Right cardiac atrium (tissue), 5 donors: ENCODE measurements at regions of chr11 and their contacts with region 1.

Region 1: DNA sequence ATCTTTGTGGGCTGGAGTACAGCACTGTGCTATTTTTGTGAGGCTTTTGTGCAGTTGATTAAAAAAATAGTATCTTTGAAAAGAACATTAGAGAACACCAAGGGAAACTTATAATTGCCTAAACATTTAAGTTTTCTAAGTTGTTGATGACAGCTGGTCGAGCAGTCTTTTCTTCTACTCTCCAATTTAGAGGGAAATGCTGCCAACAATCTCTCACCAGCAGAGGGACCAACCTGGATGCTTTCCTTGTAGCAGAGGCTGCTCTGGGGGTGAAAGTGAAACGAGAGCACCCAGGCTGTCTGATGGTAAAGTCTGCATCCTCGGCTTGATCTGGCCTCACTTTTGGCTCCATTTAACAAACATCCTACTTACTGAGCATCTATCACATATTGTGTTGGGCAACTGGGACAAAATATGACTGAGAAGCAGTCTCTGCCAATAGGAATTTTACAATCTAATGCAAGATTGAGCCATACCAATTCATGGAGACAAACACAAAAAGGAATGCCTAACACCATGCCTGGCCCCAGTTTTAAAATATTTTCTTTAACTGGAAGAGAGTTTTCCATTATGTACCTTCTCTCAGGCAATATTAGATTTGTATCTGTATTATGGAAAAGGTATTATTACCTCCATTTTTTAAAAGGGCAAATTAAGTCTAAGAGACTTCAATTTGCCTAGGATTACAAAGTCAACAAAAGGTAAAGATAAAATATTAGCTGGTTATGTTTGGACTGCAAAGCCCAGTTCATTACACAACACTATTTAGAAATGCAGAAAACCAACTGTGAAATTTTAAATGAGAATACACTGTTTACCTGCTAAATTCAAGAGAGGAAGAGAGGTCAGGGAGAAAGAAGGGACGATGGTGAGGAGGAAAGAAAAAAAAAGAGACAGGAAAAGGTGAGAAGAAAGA is 1286.7 kb upstream of the TENM4 start:
- DNase-seq: peak in 1 of 3 donors; percentile 25
- ATAC-seq: no peak
- H3K4me3 ChIP-seq: no peak overlapping the region
- H3K27ac ChIP-seq: no peak overlapping the region
- H3K4me1 ChIP-seq: no peaks in the 10 kb centered on the region
- H3K27me3 ChIP-seq: no peaks in the 10 kb centered on the region

Region 2: DNA sequence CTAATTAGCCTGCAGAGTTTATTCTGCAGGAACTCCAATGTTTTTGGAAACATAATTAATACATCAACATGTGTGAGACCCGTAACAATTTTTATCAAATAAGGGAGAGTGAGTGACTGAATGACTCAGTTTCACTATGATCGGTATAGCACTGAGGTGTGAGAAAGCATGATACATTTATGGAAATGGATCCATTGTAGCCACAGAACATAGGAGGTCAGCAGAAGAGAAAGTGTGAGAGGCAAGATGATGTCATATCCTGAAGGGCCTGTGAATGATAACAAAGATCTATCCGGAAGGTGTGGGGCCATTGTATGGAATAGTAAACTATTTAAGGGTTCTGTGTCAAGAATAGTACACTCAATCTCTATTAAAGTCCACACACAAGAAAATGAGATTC is 119.4 kb after region 1 on chr11:
- intact Hi-C with region 1: no loop called
- DNase-seq: no peak
- ATAC-seq: no peak
- H3K4me3 ChIP-seq: no peak overlapping the region
- H3K27ac ChIP-seq: no peak overlapping the region
- H3K4me1 ChIP-seq: no peaks in the 10 kb centered on the region
- H3K27me3 ChIP-seq: no peaks in the 10 kb centered on the region

Region 3: DNA sequence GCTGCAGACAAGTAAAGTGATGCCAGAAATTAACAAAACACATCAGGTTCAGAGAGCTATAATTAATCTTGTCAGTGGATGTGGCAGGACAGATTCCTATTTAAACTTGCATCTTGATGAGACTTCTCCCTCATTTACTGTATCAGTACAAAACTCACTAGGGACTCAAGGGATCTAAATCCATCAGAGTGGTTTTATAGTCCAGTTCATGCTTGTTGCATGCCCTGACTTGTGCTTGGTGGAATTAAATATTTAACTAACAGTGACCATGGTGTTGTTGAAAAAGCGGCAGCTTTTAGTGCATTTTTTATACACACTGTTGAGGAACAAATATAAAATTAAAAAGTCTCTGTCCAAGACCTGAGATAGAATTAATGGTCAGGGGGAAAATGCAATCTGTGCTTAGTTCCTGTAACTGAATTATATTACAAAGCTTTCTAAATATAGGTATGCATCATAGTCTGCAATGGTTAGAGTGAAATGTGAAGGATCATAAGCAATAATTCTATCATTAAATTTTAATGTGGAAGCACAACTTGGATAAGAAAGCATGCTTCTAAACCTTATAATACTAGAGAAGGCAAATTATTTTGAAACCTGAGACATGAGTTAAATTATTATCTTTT is 188.7 kb after region 1 on chr11:
- intact Hi-C with region 1: no loop called
- DNase-seq: no peak
- ATAC-seq: no peak
- H3K4me3 ChIP-seq: no peak overlapping the region
- H3K27ac ChIP-seq: no peak overlapping the region
- H3K4me1 ChIP-seq: no peaks in the 10 kb centered on the region
- H3K27me3 ChIP-seq: no peaks in the 10 kb centered on the region

Region 4: GRCh38 chr11:81005595-81005994 is 278.0 kb after region 1 on chr11:
- intact Hi-C with region 1: loop called in 1 of 4 experiments (anchors 10 kb)
- DNase-seq: no peak
- ATAC-seq: no peak
- H3K4me3 ChIP-seq: no peak overlapping the region
- H3K27ac ChIP-seq: no peak overlapping the region
- H3K4me1 ChIP-seq: no peaks in the 10 kb centered on the region
- H3K27me3 ChIP-seq: no peaks in the 10 kb centered on the region